Prostate gland (tissue), 2 donors: ENCODE measurements at regions of chr17 and their contacts with region 1.

Region 1: GRCh38 chr17:44636562-44636961 is 19.7 kb upstream of the MEIOC start:
- DNase-seq: no peak
- H3K4me3 ChIP-seq: no peak overlapping the region
- H3K27ac ChIP-seq: no peak overlapping the region
- H3K4me1 ChIP-seq: no peaks in the 10 kb centered on the region
- H3K27me3 ChIP-seq: no peaks in the 10 kb centered on the region
- CTCF ChIP-seq: peak in 2 of 4 experiments; percentile 60 to 67
- POLR2A ChIP-seq: no peak

Region 2: DNA sequence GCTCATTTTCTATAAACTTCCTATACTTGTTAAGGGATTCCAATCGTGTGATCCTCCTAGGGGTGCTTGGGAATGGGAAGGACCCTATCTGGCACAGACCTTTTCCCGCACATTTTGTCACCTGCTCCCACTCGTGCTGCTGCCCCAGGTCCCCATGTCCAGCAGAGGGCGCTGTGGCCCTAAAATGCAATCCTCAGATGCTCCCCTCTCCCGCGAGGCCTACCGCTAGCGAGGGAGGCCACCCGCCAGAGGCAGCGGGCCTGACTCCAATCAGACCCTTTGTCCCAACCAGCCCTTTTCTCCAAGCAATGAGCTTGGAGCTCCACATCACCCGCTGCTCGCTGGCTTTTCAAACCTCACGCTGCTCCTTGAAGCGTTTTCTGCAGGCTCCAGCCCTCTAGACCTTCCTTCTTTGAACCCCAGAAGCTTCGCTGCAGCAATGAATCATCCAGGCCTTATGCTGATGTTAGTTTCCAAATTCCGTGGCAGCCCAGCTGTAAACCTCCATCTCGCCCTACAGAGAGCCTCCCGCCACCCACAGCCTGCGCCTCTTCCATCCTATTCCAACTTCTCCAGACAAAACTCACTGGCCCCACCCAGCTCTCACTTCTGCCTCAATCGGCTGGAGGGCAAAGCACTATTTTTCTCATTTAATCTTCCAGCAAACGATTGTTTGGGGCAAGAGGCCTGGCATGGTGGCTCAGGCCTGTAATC is 102.9 kb before region 1 on chr17:
- intact Hi-C with region 1: loop called (anchors 5 kb)
- DNase-seq: peak; percentile 82
- H3K4me3 ChIP-seq: no peak overlapping the region
- H3K27ac ChIP-seq: no peak overlapping the region
- H3K4me1 ChIP-seq: no peaks in the 10 kb centered on the region
- H3K27me3 ChIP-seq: no peaks in the 10 kb centered on the region
- CTCF ChIP-seq: peak; percentile 78 to 94 (median 92)
- POLR2A ChIP-seq: no peak